GM10248 (cell line): ENCODE measurements at regions of chr12 and their contacts with region 1.

Region 1: DNA sequence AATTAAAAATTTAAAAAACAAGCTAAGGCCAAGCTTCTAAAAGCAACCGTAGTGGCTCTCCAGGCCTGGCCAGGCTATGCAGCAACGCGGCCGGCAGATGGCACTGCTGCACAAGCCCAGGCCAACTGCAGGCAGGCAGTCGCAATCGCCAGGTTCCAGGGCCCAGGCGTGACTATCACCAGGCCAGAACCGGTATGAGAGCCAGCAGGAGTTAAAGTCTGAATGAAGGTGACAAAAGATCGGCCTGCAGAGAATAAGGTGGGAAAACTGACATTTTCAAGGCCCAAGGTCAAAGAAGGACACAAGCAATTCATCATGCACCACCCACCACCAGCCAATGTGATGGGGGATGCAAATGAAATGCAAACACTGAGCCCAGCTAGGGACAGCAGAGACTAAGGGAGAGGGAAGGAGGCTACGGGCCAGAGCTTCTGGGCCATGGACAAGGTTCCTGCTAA is 43.6 kb upstream of the ANO2 start:
- DNase-seq: peak; percentile 82
- CTCF ChIP-seq: peak; percentile 98

Region 2: GRCh38 chr12:5745265-5745888 is 243.3 kb before region 1 on chr12:
- CTCF ChIA-PET with region 1: interaction called, 10 read pairs
- POLR2A ChIA-PET with region 1: no interaction called
- DNase-seq: peak; percentile 58
- CTCF ChIP-seq: peak; percentile 83

Region 3: DNA sequence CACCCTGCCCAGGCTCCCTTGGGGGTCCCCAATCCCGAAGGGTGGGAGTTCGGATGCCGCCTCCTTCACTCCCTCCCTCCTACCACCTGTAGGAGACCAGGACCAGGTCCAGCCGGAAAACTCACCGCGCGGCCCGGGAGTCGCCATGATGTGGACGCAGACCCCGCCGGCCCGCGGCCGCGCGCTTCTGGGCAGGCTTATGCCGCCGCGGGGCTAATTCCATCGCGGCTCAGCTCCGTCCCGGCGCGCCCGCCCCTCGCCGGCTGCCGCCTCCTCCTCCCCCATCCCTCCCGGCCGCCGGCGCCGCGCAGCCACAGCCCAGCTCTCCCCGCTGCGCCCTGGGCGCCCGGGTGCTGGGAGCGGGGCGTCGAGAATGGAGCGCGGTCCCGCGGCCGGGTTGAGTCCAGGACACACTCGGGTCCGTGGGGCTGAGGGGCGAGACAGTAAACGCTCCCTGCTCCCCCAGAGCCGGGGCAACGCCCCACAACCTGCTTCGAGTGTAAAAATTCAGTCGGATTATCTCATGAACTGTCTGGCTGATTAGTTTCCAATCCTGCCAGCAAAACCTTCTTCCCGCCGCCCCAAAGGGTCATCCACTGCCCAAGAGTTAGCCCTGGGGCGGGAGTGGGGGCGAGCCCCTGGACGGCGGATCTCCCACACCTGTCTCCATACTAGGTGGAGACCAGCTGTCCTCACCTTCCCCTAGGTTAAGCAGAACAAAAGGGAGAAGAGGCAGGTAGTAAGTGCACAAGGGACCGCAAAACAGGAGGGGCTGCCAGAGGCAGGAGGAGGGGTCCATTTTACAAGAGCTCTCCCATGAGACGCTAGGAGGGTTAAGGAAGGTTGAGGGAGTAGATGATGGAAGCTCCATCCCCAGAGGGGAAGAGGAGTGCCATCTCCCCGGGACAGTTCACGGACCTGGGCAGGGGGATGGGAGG is 43.3 kb before region 1 on chr12 and contains the start of gene ANO2:
- CTCF ChIA-PET with region 1: no interaction called
- POLR2A ChIA-PET with region 1: no interaction called
- DNase-seq: no peak
- CTCF ChIP-seq: no peak

Region 4: DNA sequence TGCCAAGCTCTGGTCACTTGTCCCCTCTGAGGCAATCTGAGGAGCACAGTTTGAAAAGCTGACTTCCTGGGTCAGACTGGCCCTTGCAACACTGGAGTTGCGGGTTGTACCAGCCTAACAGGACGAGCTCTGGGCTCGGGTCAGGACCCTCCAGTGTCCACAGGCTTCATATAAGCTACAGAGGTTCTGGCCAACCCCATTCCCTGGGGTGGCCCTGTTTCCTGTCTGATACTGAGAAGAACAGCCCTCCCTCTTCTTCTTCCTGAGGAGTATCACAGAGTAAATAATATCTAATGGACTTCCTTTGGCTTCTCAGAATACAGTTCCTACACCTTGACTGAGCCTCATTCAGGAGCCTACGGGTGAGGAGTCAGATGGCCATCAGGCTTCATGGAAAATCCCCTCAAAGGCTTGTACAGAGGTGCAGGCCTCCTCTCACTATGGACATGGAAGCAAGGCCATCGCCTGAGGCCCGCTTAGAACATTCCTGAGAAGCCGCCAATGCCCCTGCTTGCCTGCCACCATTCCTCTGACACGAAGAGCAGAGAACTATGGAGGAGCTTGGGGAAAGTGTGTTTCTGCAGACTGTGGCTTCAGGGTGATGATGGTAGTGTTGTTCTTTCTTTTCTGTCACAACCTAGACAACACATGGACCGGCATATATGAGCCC is 15.1 kb before region 1 on chr12:
- CTCF ChIA-PET with region 1: interaction called, 11 read pairs
- POLR2A ChIA-PET with region 1: no interaction called
- DNase-seq: no peak
- CTCF ChIP-seq: no peak

Region 5: GRCh38 chr12:6033546-6033945 is 44.9 kb after region 1 on chr12:
- CTCF ChIA-PET with region 1: interaction called, 255 read pairs
- POLR2A ChIA-PET with region 1: no interaction called
- DNase-seq: no peak
- CTCF ChIP-seq: no peak

Region 6: GRCh38 chr12:6285063-6285477 is 296.4 kb after region 1 on chr12:
- CTCF ChIA-PET with region 1: interaction called, 28 read pairs
- POLR2A ChIA-PET with region 1: no interaction called
- DNase-seq: peak; percentile 84
- CTCF ChIP-seq: peak; percentile 80